ENCODE measurements at regions of chr10 and their contacts with region 1.

Region 1: GRCh38 chr10:72364239-72364777 is 9.6 kb upstream of the DNAJB12 start:
- DNase-seq: peak; percentile 73 to 91 (median 85)
- ATAC-seq: peak; percentile 100
- H3K4me3 ChIP-seq: peak overlapping the region; percentile 11 to 12
- H3K4me3 Mint-ChIP-seq: peak overlapping the region; percentile 44
- H3K27ac ChIP-seq: peak overlapping the region in 1 of 2 experiments; percentile 30
- H3K27ac Mint-ChIP-seq: peak overlapping the region; percentile 84
- H3K4me1 ChIP-seq: peaks cover 9% of the 10 kb centered on the region
- H3K4me1 Mint-ChIP-seq: peaks cover 16% of the 10 kb centered on the region
- H3K27me3 ChIP-seq: no peaks in the 10 kb centered on the region
- H3K27me3 Mint-ChIP-seq: no peaks in the 10 kb centered on the region
- CTCF ChIP-seq: peak; percentile 68

Region 2: GRCh38 chr10:72567884-72568640 is 203.8 kb after region 1 on chr10:
- CTCF ChIA-PET with region 1: no interaction called
- POLR2A ChIA-PET with region 1: no interaction called
- intact Hi-C with region 1: loop called (anchors 5 to 10 kb)
- DNase-seq: peak in 1 of 9 experiments; percentile 9
- ATAC-seq: no peak
- H3K4me3 ChIP-seq: no peak overlapping the region
- H3K4me3 Mint-ChIP-seq: no peak overlapping the region
- H3K27ac ChIP-seq: no peak overlapping the region
- H3K27ac Mint-ChIP-seq: no peak overlapping the region
- H3K4me1 ChIP-seq: no peaks in the 10 kb centered on the region
- H3K4me1 Mint-ChIP-seq: peaks cover 5% of the 10 kb centered on the region
- H3K27me3 ChIP-seq: no peaks in the 10 kb centered on the region
- H3K27me3 Mint-ChIP-seq: no peaks in the 10 kb centered on the region
- CTCF ChIP-seq: no peak

Region 3: DNA sequence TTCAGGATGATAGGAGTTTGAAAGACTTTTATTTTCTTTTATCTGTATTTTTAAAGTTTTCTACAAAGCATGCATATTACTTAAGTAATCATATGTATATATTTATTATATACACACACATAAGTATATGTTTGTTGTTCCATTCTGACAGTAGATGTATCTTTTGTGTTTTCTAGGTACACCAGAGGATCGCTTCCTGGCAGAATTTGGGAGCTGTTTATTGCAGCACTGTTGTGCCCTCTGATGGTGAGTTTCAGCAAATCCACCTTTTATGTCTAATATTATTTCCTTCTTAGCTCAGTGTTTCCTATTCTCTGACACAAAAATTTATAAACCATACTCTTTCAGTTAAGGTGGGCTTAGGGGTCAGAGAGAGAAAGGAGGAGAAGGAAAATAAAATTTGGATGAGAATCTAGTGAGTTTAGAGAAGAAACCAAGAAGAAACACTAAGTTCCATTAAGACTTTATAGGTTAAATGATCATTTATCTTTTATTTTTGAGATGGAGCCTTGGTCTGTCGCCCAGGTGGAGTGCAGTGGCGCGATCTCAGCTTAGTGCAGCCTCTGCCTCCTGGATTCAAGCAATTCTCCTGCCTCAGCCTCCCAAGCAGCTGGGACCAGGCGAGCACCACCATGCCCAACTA is 470.0 kb after region 1 on chr10:
- CTCF ChIA-PET with region 1: interaction called, 78 read pairs
- POLR2A ChIA-PET with region 1: interaction called, 4 read pairs
- intact Hi-C with region 1: loop called in 1 of 2 experiments (anchors 1 kb)
- DNase-seq: peak in 7 of 9 experiments; percentile 9 to 75 (median 34)
- ATAC-seq: peak; percentile 71
- H3K4me3 ChIP-seq: no peak overlapping the region
- H3K4me3 Mint-ChIP-seq: no peak overlapping the region
- H3K27ac ChIP-seq: no peak overlapping the region
- H3K27ac Mint-ChIP-seq: no peak overlapping the region
- H3K4me1 ChIP-seq: no peaks in the 10 kb centered on the region
- H3K4me1 Mint-ChIP-seq: peaks cover 2% of the 10 kb centered on the region
- H3K27me3 ChIP-seq: no peaks in the 10 kb centered on the region
- H3K27me3 Mint-ChIP-seq: no peaks in the 10 kb centered on the region
- CTCF ChIP-seq: peak; percentile 64

Region 4: GRCh38 chr10:73060738-73061635 is 696.7 kb after region 1 on chr10:
- CTCF ChIA-PET with region 1: interaction called, 7 read pairs
- POLR2A ChIA-PET with region 1: no interaction called
- intact Hi-C with region 1: loop called in 1 of 2 experiments (anchors 1 kb)
- DNase-seq: peak in 2 of 9 experiments; percentile 37 to 55
- ATAC-seq: no peak
- H3K4me3 ChIP-seq: no peak overlapping the region
- H3K4me3 Mint-ChIP-seq: no peak overlapping the region
- H3K27ac ChIP-seq: no peak overlapping the region
- H3K27ac Mint-ChIP-seq: no peak overlapping the region
- H3K4me1 ChIP-seq: no peaks in the 10 kb centered on the region
- H3K4me1 Mint-ChIP-seq: peaks cover 8% of the 10 kb centered on the region
- H3K27me3 ChIP-seq: no peaks in the 10 kb centered on the region
- H3K27me3 Mint-ChIP-seq: no peaks in the 10 kb centered on the region
- CTCF ChIP-seq: peak; percentile 39

Region 5: DNA sequence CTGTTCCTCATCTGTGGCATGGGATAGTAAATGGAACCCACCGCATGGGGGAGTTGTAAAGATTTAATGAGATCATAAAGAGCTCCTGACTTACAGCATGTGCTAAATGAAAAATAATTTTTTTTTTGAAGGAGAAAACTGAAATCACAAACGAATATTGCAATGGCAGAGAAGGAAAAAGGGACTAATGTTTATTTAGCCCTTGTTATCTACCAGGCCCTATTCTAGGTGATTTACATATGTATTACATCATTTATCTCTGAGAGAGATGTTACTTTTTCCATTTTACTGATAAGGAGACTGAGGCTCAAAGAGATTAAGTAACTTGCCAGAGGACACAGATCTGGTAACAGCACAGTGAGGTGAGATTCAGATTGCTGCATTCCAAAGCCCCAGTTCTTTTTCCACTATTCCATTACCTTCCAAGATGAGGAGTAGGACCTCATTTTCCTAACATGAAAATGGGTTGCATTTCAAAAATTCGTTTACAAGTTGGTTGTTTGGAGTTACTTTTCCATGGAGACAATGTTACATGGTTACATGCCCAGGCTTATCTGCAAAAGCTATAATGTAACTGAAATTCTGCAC is 1662.2 kb after region 1 on chr10:
- CTCF ChIA-PET with region 1: no interaction called
- POLR2A ChIA-PET with region 1: no interaction called
- intact Hi-C with region 1: no loop called
- DNase-seq: no peak
- ATAC-seq: no peak
- H3K4me3 ChIP-seq: no peak overlapping the region
- H3K4me3 Mint-ChIP-seq: no peak overlapping the region
- H3K27ac ChIP-seq: no peak overlapping the region
- H3K27ac Mint-ChIP-seq: no peak overlapping the region
- H3K4me1 ChIP-seq: no peaks in the 10 kb centered on the region
- H3K4me1 Mint-ChIP-seq: peaks cover 10% of the 10 kb centered on the region
- H3K27me3 ChIP-seq: no peaks in the 10 kb centered on the region
- H3K27me3 Mint-ChIP-seq: no peaks in the 10 kb centered on the region
- CTCF ChIP-seq: no peak